A673 (cell line): ENCODE measurements at regions of chr2 and their contacts with region 1.

Region 1: GRCh38 chr2:230798769-230799399 is 65.9 kb upstream of the ITM2C start:
- DNase-seq: peak; percentile 69
- H3K4me3 ChIP-seq: no peak overlapping the region
- H3K27ac ChIP-seq: no peak overlapping the region
- H3K4me1 ChIP-seq: no peaks in the 10 kb centered on the region
- H3K27me3 ChIP-seq: no peaks in the 10 kb centered on the region
- CTCF ChIP-seq: peak; percentile 74

Region 2: DNA sequence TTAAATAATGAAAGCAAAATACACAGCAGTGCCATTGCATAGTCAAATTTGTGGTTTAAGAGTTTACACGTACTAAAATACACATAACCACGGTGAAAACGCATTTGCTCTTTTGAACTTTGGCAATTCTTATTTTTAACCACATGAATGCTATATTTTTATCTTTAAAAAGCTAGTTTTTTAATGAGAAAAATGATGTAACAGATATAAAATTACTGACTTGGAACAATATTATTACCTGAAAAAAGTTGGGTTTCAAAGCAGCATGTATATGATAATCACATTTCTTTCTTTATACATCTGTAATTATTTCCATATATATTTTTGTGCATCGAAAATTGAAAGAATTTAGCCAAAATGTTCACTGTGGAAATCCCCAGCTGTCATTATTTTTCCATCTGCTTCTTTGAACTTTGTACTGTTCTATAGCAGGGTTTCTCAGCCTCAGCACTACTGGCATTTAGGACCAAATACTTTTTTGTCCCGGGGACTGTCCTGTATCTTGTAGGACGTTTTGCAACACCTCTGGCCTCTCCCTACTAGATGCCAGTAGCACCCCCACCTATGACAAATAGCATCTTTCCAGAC is 162.1 kb before region 1 on chr2:
- CTCF ChIA-PET with region 1: no interaction called
- POLR2A ChIA-PET with region 1: no interaction called
- intact Hi-C with region 1: loop called (anchors 10 kb)
- DNase-seq: no peak
- H3K4me3 ChIP-seq: no peak overlapping the region
- H3K27ac ChIP-seq: no peak overlapping the region
- H3K4me1 ChIP-seq: no peaks in the 10 kb centered on the region
- H3K27me3 ChIP-seq: no peaks in the 10 kb centered on the region
- CTCF ChIP-seq: no peak

Region 3: GRCh38 chr2:230712443-230713330 is 86.2 kb before region 1 on chr2 and contains the start of gene CAB39:
- CTCF ChIA-PET with region 1: no interaction called
- POLR2A ChIA-PET with region 1: no interaction called
- intact Hi-C with region 1: loop called (anchors 2 kb)
- DNase-seq: peak; percentile 95
- H3K4me3 ChIP-seq: peak within 1 kb of the TSS; percentile 92
- H3K27ac ChIP-seq: peak within 1 kb of the TSS; percentile 89
- H3K4me1 ChIP-seq: peaks cover 15% of the 10 kb centered on the region
- H3K27me3 ChIP-seq: no peaks in the 10 kb centered on the region
- CTCF ChIP-seq: peak; percentile 69
- total RNA-seq, gene CAB39: 50.9 and 58.2 TPM in 2 replicates

Region 4: GRCh38 chr2:232030229-232030628 is 1231.3 kb after region 1 on chr2:
- CTCF ChIA-PET with region 1: no interaction called
- POLR2A ChIA-PET with region 1: no interaction called
- intact Hi-C with region 1: no loop called
- DNase-seq: no peak
- H3K4me3 ChIP-seq: no peak overlapping the region
- H3K27ac ChIP-seq: no peak overlapping the region
- H3K4me1 ChIP-seq: no peaks in the 10 kb centered on the region
- H3K27me3 ChIP-seq: no peaks in the 10 kb centered on the region
- CTCF ChIP-seq: peak; percentile 49; the same call in 1 of the 2 replicates